ENCODE measurements at regions of chr5 and their contacts with region 1.

Region 1: DNA sequence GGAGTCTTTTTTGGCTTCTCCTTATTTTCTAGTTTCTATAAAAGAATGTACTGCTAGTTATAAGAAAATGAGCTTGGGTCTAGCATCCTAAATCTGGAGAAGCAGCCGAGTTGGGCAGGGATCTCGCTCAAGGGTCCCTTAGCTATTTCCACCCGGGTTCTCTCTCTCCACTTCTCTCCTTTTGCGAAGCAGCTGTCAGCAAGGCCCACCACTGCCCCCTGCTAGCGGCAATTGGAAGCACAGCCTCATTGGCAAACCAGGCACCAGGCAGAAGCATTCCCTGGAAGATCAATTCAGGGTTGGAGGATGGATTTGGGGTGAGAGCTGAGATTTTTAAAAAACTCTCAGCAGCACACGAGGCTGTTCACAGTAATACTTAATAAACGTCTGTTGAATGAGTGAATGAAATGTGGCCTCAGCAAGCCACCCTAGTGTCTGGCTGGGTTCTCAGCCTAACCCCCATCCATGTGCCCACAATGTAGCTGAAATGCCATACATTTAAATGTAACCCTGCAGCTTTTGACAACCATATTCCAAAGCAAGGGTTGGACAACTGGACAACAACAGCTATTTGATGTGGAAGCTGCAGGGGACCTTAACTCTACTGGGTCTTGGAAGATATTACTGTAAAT is 34.6 kb upstream of the TNIP1 start:
- DNase-seq: peak; percentile 92

Region 2: GRCh38 chr5:150278916-150279315 is 836.5 kb before region 1 on chr5:
- intact Hi-C with region 1: no loop called
- DNase-seq: no peak

Region 3: GRCh38 chr5:150846654-150847333 is 268.6 kb before region 1 on chr5:
- intact Hi-C with region 1: no loop called
- DNase-seq: no peak

Region 4: DNA sequence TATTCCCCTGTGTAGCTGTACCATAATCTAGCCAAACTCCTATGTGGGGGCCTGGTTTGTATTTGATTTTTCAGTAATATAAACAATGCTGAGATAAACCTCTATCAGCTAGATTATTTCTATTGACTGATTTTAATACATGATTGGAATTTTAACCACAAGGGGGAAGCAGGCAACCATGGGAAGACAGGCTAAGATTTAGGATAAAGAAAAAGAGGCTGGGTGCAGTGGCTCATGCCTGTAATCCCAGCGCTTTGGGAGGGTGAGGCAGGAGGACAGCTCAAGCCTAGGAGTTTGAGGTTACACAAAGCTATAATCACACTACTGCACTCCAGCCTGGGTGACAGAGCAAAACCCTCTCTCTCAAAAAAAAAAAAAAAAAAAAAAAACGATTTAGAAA is 113.1 kb before region 1 on chr5:
- intact Hi-C with region 1: loop called in 1 of 2 experiments (anchors 5 kb)
- DNase-seq: no peak

Region 5: DNA sequence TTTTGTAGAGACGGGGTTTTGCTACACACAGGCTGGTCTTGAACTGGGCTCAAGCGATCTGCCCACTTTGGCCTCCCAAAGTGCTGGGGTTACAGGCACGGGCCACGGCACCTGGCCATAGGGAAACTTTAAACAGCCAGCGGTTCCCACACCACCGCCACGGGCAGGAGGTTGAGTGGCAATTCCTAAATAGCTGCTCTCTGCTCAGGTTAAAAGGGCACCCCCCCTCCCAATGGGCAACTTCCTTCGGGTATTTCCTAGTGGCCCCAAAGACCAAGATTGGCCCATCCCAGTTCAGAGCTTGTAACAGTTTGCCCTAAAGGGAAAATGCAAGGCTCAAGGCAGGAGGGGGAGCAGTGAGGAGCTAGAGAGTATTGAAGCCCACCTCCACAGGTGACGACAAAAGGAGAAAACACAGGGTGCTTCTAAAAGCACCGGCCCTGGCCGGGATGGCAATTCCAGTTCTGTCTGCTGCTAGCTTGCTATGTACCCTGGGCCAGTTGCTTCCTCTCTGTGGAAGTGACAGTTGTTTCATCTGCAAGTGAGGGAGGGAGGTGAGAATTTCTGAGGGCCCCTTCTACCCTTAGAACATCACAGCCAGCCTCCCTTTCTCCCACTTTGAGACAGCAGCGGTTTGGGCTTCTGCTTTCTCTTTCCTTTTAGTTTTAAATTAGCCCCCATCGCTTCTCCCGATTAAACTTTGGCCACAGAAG is 17.4 kb before region 1 on chr5:
- intact Hi-C with region 1: no loop called
- DNase-seq: no peak

Measured in posterior vena cava (tissue), 2 donors.